Posterior cingulate gyrus (tissue), 11 donors: ENCODE measurements at regions of chr16 and their contacts with region 1.

Region 1: GRCh38 chr16:9372934-9373890 is 281.8 kb downstream of the HAPSTR1 start:
- DNase-seq: peak in 9 of 10 donors; percentile 18 to 95 (median 65)

Region 2: GRCh38 chr16:9602189-9602588 is 229.0 kb after region 1 on chr16:
- intact Hi-C with region 1: loop called (anchors 10 kb)
- DNase-seq: no peak